GM18951 (cell line): ENCODE measurements at regions of chr2 and their contacts with region 1.

Region 1: DNA sequence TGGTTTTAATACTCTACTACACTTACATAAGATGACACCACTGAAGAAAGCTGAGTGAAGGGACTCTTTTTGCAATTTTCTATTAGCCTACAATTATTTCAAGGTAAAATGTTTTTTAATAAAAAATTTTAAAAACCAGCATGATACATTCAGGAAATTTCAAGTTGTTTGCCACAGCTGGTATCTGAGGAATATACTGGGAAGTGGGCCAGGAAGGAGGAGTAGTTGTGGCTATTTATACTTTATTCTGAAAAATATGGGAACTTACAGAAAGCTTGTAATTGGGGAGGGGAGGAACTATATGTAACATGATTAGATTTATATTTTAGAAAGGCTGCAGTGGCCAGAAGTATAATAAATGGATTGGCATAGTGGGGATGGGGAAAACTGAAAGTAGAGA is 40.8 kb downstream of the WDR35 start:
- POLR2A ChIP-seq: no peak

Region 2: GRCh38 chr2:19532547-19533196 is 416.4 kb before region 1 on chr2:
- in situ Hi-C with region 1: no loop called
- POLR2A ChIP-seq: no peak

Region 3: DNA sequence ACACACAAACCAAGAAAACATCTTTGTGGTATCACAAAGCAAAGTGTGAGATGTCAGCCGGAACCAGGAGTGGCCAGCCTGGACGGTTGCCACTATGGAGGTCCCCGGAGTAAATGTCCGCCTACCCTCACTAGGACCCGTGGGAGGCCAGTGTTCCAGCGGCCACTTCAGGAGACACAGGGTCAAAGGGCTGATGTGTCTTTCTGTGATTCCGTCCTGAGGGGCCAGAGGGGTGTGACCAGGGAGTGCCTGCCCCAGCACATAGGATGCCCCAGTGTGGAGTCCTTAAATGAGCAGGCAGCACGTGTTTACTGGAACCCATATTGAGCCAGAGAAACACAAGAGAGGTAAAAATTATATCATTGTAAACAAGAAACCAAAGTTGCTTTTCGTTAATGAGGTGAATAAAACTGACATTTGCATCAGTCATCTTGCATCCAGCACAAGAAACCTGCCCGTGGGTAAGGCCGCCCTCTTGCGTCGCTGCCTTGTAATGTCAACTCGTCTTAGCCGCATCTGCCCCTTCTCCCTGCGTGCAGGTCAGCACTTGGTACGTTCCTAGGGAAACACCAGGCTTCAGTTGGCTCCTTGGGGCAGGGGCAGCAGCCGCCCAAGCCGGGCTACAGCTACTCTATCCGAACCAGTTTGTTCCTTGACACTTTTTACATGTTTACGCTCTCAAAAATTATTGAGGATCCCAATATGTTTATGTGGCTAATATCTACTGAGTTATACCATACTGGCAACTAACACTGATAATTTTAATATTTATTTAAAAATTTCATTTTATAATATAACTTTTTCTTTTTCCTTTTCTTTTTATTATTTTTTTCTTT is 149.0 kb after region 1 on chr2:
- in situ Hi-C with region 1: loop called (anchors 10 kb)
- POLR2A ChIP-seq: no peak